ENCODE measurements at regions of chr16 and their contacts with region 1.

Region 1: GRCh38 chr16:589658-590159 is at the start of gene RAB40C:
- DNase-seq: peak; percentile 99 to 100 (median 100)
- ATAC-seq: peak; percentile 92 to 97 (median 96)
- H3K4me3 ChIP-seq: peak within 1 kb of the TSS; percentile 77 to 97 (median 90)
- H3K27ac ChIP-seq: peak within 1 kb of the TSS; percentile 89 to 100 (median 98)
- H3K4me1 ChIP-seq: peaks cover 5 to 64% (median 34%) of the 10 kb centered on the region in 12 donors
- H3K27me3 ChIP-seq: no peaks in the 10 kb centered on the region
- CTCF ChIP-seq: peak in 5 of 12 donors; percentile 23 to 44 (median 28)
- POLR2A ChIP-seq: no peak
- total RNA-seq, gene RAB40C: 10.2 to 17.8 (median 12.6) TPM

Region 2: GRCh38 chr16:527006-527753 is 62.5 kb before region 1 on chr16 and contains the start of gene CAPN15:
- intact Hi-C with region 1: loop called in 1 of 10 experiments (anchors 2 kb)
- DNase-seq: peak; percentile 88 to 94 (median 90)
- ATAC-seq: peak; percentile 60 to 89 (median 84)
- H3K4me3 ChIP-seq: peak within 1 kb of the TSS; percentile 58 to 94 (median 76)
- H3K27ac ChIP-seq: peak within 1 kb of the TSS; percentile 89 to 100 (median 98)
- H3K4me1 ChIP-seq: peaks cover 11 to 59% (median 39%) of the 10 kb centered on the region in 12 donors
- H3K27me3 ChIP-seq: no peaks in the 10 kb centered on the region
- CTCF ChIP-seq: peak in 5 of 12 donors; percentile 6 to 33 (median 26)
- POLR2A ChIP-seq: peak in 1 of 2 donors; percentile 91
- total RNA-seq, gene CAPN15: 12.0 to 35.5 (median 20.0) TPM

Region 3: GRCh38 chr16:626787-627186 is 37.1 kb after region 1 on chr16:
- intact Hi-C with region 1: loop called in 2 of 10 experiments (anchors 5 kb)
- DNase-seq: peak in 1 of 5 donors; percentile 26
- ATAC-seq: no peak
- H3K4me3 ChIP-seq: no peak overlapping the region
- H3K27ac ChIP-seq: peak overlapping the region in 1 of 12 donors; percentile 57
- H3K4me1 ChIP-seq: peaks cover 0 to 25% (median 21%) of the 10 kb centered on the region in 12 donors
- H3K27me3 ChIP-seq: no peaks in the 10 kb centered on the region
- CTCF ChIP-seq: no peak
- POLR2A ChIP-seq: no peak

Region 4: GRCh38 chr16:636206-637080 is 46.7 kb after region 1 on chr16 and contains the start of gene METTL26:
- intact Hi-C with region 1: loop called in 5 of 10 experiments (anchors 1 to 10 kb)
- DNase-seq: peak; percentile 95 to 99 (median 97)
- ATAC-seq: peak; percentile 82 to 93 (median 89)
- H3K4me3 ChIP-seq: peak within 1 kb of the TSS; percentile 69 to 94 (median 82)
- H3K27ac ChIP-seq: peak within 1 kb of the TSS; percentile 94 to 100 (median 97)
- H3K4me1 ChIP-seq: peaks cover 3 to 30% (median 17%) of the 10 kb centered on the region in 12 donors
- H3K27me3 ChIP-seq: no peaks in the 10 kb centered on the region
- CTCF ChIP-seq: no peak
- POLR2A ChIP-seq: peak in 1 of 2 donors; percentile 74
- total RNA-seq, gene METTL26: 39.6 to 187 (median 44.7) TPM

Region 5: DNA sequence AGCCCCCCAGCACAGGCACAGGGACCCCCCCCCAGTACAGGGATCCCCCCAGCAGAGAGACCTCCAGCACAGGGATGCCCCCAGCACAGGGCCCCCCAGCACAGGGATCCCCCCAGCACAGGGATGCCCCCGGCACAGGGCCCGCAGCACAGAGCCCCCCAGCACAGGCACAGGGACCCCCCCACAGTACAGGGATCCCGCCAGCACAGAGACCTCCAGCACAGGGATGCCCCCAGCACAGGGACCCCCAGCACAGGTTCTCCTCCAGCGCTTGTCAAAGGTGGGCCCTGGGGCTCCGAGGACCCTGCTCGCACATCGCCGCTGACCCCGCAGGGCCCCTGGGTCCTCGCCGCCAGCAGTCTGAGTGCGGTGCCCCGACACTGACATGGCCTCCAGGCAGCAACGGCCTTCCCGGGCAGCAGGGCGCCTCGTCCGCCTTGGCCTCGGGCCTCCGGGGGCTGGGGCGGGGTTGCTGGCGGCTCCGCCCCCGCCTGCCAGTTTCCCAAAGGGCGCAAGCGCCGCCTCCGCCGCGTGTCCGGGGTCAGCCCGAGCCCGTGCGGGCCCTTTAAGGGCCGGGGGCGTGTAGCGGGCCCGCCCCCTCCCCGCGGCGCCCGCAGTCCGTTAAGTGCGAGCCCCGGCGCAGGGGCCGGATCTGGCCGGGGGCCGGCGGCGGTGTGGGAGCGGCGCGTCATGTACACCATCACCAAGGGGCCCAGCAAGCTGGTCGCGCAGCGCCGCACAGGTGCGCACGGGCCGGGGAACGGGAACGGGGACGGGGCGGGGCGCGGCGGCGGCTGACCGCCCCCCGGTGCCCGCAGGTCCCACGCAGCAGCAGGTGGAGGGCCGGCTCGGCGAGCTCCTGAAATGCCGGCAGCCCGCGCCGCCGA is 51.8 kb after region 1 on chr16 and contains the start of gene MCRIP2:
- intact Hi-C with region 1: loop called in 6 of 10 experiments (anchors 1 to 10 kb)
- DNase-seq: peak; percentile 89 to 96 (median 93)
- ATAC-seq: peak; percentile 29 to 71 (median 68)
- H3K4me3 ChIP-seq: peak within 1 kb of the TSS; percentile 59 to 94 (median 77)
- H3K27ac ChIP-seq: peak within 1 kb of the TSS; percentile 84 to 99 (median 94)
- H3K4me1 ChIP-seq: peaks cover 0 to 62% (median 27%) of the 10 kb centered on the region in 12 donors
- H3K27me3 ChIP-seq: no peaks in the 10 kb centered on the region
- CTCF ChIP-seq: no peak
- POLR2A ChIP-seq: peak; percentile 65 to 90
- total RNA-seq, gene MCRIP2: 52.3 to 219 (median 89.5) TPM

Region 6: DNA sequence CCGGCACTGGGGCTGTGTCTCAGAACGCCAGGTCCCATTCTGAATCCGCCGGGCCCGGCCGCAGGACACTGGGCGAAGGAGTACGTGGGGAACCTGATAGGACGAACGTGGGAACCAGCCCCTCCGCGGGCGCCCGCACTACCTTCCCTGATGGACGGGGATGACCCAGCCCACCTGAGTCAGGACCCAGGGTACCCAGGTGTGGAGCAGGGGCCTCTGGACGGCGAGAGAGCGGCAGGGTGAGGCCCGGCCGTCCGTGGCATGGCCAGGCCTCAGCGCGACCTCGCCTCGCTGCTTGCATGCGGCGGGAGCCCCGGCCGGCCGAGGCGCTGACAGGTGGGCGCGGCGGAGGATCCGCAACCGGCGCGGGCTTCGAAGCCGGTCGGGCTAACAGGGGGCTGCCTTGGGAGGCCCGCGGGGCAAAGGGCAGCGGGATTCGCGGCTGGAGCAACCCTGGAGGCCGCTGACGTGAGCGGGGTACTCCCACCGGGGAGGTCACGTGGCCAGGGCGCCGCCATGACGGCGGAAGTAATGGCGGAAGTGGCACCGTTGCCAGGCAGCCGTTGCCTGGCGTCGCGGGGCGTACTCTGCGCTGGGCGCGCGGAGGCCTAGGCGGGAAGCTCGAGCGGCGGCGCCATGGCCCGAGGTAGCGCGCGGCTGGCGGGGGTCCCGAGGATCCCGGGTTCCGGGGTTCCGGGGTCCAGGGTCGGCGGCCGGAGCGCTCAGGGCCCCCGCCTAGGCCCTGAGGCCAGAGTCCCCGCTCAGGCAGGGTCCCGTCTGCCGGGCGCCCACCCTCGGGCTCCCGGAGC is 59.3 kb after region 1 on chr16 and contains the start of gene WDR90:
- intact Hi-C with region 1: loop called in 3 of 10 experiments (anchors 10 kb)
- DNase-seq: peak; percentile 94 to 97 (median 96)
- ATAC-seq: peak; percentile 71 to 88 (median 85)
- H3K4me3 ChIP-seq: peak within 1 kb of the TSS; percentile 61 to 94 (median 74)
- H3K27ac ChIP-seq: peak within 1 kb of the TSS; percentile 76 to 97 (median 88)
- H3K4me1 ChIP-seq: peaks cover 3 to 66% (median 40%) of the 10 kb centered on the region in 12 donors
- H3K27me3 ChIP-seq: no peaks in the 10 kb centered on the region
- CTCF ChIP-seq: no peak
- POLR2A ChIP-seq: no peak
- total RNA-seq, gene WDR90: 3.7 to 17.4 (median 8.6) TPM